SK-N-SH (cell line): ENCODE measurements at regions of chr9 and their contacts with region 1.

Region 1: DNA sequence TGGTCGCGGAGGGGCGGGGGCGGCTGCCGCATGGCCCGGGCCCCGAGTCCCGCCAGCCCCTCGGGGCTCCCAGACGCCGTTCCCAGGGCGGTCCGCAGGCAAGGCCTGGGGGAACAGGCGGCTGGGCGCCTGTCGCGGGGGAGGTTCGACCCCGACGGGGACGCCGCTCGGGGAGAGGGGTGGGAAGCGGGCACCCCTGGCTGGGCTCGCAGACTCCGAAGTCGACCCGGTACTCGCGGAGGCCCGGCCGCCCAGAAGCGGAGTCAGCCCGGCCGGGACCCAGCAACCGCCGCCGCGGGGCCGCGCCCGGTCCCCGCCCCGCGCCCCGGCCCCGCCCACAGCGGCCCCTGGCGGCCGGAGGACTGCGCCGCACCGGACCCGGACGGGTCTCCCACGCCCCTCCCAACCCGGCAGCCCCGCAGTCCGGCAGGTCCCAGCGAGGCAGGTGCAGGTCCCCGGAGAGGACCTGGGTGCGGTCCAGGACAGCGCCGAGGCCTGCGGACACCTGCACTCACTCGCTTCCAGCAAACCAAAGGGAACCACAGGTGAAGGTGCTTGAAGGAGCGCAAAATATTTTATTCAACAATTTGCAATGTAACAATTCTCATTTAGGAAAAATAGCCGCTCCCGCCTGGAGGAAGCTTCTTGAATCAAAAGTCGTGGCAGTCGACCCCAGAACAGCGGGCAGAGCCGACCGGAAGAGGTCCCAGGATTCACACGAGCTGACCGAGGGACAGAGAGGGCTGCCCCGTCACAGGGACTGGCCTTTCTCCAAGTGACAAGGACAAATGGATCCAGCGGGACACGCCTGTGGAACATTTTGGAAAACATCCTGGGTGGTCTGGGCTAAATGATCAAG is at the start of gene INPP5E:
- DNase-seq: peak; percentile 99
- H3K4me3 ChIP-seq: peak within 1 kb of the TSS; percentile 81 to 83
- H3K27ac ChIP-seq: peak within 1 kb of the TSS; percentile 47 to 68; a peak in 3 of 4 replicates
- H3K4me1 ChIP-seq: peaks cover 0 to 21% of the 10 kb centered on the region in 2 experiments; a peak in 1 of 4 replicates
- H3K27me3 ChIP-seq: no peaks in the 10 kb centered on the region
- CTCF ChIP-seq: peak; percentile 57
- EP300 ChIP-seq: no peak
- RAD21 ChIP-seq: no peak
- polyA plus RNA-seq, gene INPP5E: 10.5 and 12.8 TPM in 2 replicates

Region 2: DNA sequence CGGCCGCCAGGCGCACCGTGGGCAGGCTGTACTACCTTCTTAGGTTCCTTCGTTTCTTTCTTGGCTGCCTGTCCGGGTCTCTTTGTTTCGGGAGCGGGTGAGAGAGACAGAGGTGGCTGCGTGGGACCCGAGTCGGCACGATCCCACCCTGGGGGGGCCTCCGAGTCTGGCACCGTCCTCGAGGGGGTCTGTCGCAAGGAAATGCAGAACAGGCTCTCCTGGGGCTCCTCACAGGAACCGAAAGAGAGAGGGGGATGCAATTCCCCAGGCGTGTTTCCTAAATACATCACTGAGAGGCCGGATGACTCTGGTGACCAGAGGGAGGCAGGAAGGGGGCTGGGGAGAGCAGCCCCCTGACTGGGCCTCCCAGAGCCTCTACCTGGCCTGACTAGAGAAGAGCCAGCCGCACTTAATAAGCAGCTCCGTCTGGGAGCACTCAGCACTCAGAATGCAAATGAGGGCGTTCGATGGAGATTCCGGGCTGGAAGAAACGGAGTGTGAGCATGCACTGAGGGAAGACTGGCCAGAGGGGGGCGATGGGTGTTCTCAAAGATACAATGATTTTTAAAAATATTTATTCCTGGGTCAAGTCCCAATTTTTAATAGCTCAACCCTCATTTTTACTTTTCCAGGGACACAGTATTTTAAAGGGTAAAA is 11.6 kb after region 1 on chr9:
- CTCF ChIA-PET with region 1: interaction called, 14 read pairs
- POLR2A ChIA-PET with region 1: no interaction called
- DNase-seq: no peak
- H3K4me3 ChIP-seq: no peak overlapping the region
- H3K27ac ChIP-seq: no peak overlapping the region
- H3K4me1 ChIP-seq: no peaks in the 10 kb centered on the region
- H3K27me3 ChIP-seq: no peaks in the 10 kb centered on the region
- CTCF ChIP-seq: peak; percentile 15; the same call in 1 of the 2 replicates
- EP300 ChIP-seq: no peak
- RAD21 ChIP-seq: no peak